ENCODE measurements at regions of chr19 and their contacts with region 1.

Region 1: GRCh38 chr19:21835810-21836444 is at the start of gene ZNF43:
- DNase-seq: peak; percentile 87 to 97 (median 91)
- ATAC-seq: peak; percentile 98
- H3K4me3 ChIP-seq: peak within 1 kb of the TSS; percentile 81
- H3K4me3 Mint-ChIP-seq: peak within 1 kb of the TSS; percentile 97
- H3K27ac ChIP-seq: peak within 1 kb of the TSS; percentile 82 to 83
- H3K27ac Mint-ChIP-seq: peak within 1 kb of the TSS; percentile 94
- H3K4me1 ChIP-seq: peaks cover 14% of the 10 kb centered on the region
- H3K4me1 Mint-ChIP-seq: peaks cover 33% of the 10 kb centered on the region
- H3K27me3 ChIP-seq: no peaks in the 10 kb centered on the region
- H3K27me3 Mint-ChIP-seq: no peaks in the 10 kb centered on the region
- CTCF ChIP-seq: no peak
- total RNA-seq, gene ZNF43: 26.1 to 30.2 TPM

Region 2: DNA sequence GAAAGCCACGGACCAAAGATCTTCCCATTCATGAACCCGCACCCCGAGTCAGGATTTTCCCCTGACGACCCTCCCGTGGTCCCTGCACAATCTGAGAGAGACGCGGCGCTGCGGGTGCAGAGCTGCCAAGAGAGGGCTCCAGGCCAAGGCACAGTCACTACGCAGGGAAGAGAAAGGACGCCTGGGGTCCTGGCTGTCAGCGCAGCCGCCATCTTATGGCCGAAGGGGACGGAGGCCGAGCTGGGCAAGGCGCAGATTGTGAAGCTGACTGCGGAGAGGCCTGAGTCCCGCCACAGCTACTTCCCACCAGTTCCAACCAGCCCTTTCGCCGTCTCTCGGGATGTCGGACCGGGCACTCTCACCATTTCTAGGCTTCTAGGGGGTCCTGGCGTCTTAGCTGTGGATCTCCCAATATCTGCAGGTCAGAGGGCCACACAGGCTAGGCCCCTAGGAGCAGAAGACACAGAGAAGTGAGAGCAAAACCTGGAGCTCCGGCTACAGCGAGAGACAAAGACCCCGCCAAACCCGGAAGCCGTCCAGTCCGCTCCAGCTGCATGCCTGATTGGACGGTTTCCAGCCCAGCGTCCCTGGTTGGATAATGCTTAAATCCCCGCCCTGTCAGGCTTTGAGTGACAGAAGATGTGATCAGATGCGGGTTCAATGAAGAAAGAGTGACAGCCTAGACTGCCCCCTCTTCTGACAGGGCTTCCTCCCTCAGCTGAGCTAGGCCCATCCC is 68.7 kb before region 1 on chr19 and contains the start of gene ZNF100:
- CTCF ChIA-PET with region 1: no interaction called
- POLR2A ChIA-PET with region 1: interaction called, 50 read pairs
- intact Hi-C with region 1: loop called (anchors 2 kb)
- DNase-seq: peak; percentile 73 to 92 (median 82)
- ATAC-seq: peak; percentile 98
- H3K4me3 ChIP-seq: peak within 1 kb of the TSS; percentile 94
- H3K4me3 Mint-ChIP-seq: peak within 1 kb of the TSS; percentile 95
- H3K27ac ChIP-seq: peak within 1 kb of the TSS; percentile 44 to 52
- H3K27ac Mint-ChIP-seq: peak within 1 kb of the TSS; percentile 87
- H3K4me1 ChIP-seq: peaks cover 13% of the 10 kb centered on the region
- H3K4me1 Mint-ChIP-seq: peaks cover 45% of the 10 kb centered on the region
- H3K27me3 ChIP-seq: no peaks in the 10 kb centered on the region
- H3K27me3 Mint-ChIP-seq: no peaks in the 10 kb centered on the region
- CTCF ChIP-seq: no peak
- total RNA-seq, gene ZNF100: 10.8 to 11.0 TPM

Measured in CD4-positive, alpha-beta T cell (primary cell).